Panc1 (cell line): ENCODE measurements at regions of chr1 and their contacts with region 1.

Region 1: DNA sequence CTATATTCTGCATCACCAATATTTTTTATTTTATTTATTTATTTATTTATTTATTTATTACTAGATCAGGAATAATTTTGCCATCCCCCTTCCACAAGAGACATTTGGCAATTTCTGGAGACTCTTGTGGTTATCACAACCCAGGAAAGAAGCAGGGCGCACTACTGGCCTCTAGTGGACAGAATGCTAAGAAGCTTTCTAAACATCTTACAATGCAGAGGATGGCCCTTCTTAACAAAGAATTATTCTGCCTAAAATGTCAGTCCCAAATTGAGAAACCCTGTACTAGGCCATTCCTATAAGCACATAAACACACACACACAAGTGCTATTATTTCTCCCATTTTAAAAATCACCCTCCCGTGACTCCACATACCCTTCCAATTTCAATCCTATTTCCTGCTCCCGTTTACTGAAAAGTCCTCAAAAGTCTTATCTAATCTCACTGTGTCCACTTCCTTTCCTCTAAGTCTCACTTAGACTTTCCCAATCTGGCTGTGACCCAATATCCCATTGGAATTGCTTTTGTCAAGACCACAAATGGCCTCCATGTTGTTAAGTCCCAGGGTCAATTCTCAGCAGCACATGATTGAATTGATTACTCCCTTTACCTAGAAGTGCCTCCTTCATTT is 43.7 kb upstream of the RNF11 start:
- DNase-seq: no peak
- ATAC-seq: peak; percentile 82
- H3K4me3 ChIP-seq: no peak overlapping the region
- H3K27ac ChIP-seq: no peak overlapping the region
- H3K4me1 ChIP-seq: no peaks in the 10 kb centered on the region
- H3K27me3 ChIP-seq: no peaks in the 10 kb centered on the region
- CTCF ChIP-seq: peak; percentile 84

Region 2: GRCh38 chr1:50368179-50369012 is 823.9 kb before region 1 on chr1:
- CTCF ChIA-PET with region 1: no interaction called
- POLR2A ChIA-PET with region 1: no interaction called
- in situ Hi-C with region 1: no loop called
- intact Hi-C with region 1: loop called (anchors 5 kb)
- DNase-seq: peak; percentile 13
- ATAC-seq: peak; percentile 92
- H3K4me3 ChIP-seq: peak overlapping the region; percentile 7 to 23; a peak in 2 of 4 replicates
- H3K27ac ChIP-seq: no peak overlapping the region
- H3K4me1 ChIP-seq: peaks cover 3% of the 10 kb centered on the region; the same call in 1 of the 2 replicates
- H3K27me3 ChIP-seq: peaks cover 15% of the 10 kb centered on the region
- CTCF ChIP-seq: peak; percentile 91

Region 3: GRCh38 chr1:50774759-50775351 is 417.5 kb before region 1 on chr1:
- CTCF ChIA-PET with region 1: no interaction called
- POLR2A ChIA-PET with region 1: no interaction called
- in situ Hi-C with region 1: no loop called
- intact Hi-C with region 1: loop called (anchors 2 kb)
- DNase-seq: peak; percentile 15
- ATAC-seq: peak; percentile 74; the same call in 1 of the 2 replicates
- H3K4me3 ChIP-seq: no peak overlapping the region
- H3K27ac ChIP-seq: no peak overlapping the region
- H3K4me1 ChIP-seq: no peaks in the 10 kb centered on the region
- H3K27me3 ChIP-seq: no peaks in the 10 kb centered on the region
- CTCF ChIP-seq: peak; percentile 74; the same call in 1 of the 2 replicates

Region 4: GRCh38 chr1:50873458-50874187 is 318.7 kb before region 1 on chr1:
- CTCF ChIA-PET with region 1: interaction called, 6 read pairs
- POLR2A ChIA-PET with region 1: no interaction called
- in situ Hi-C with region 1: no loop called
- intact Hi-C with region 1: loop called (anchors 5 kb)
- DNase-seq: peak; percentile 65
- ATAC-seq: peak; percentile 98
- H3K4me3 ChIP-seq: peak overlapping the region; percentile 23 to 54
- H3K27ac ChIP-seq: peak overlapping the region; percentile 18; the same call in 1 of the 2 replicates
- H3K4me1 ChIP-seq: peaks cover 5% of the 10 kb centered on the region; the same call in 1 of the 2 replicates
- H3K27me3 ChIP-seq: no peaks in the 10 kb centered on the region
- CTCF ChIP-seq: peak; percentile 95

Region 5: GRCh38 chr1:50968158-50968820 is 224.0 kb before region 1 on chr1:
- CTCF ChIA-PET with region 1: interaction called, 10 read pairs
- POLR2A ChIA-PET with region 1: no interaction called
- in situ Hi-C with region 1: no loop called
- intact Hi-C with region 1: no loop called
- DNase-seq: no peak
- ATAC-seq: peak; percentile 90
- H3K4me3 ChIP-seq: peak overlapping the region; percentile 74 to 95
- H3K27ac ChIP-seq: peak overlapping the region; percentile 100
- H3K4me1 ChIP-seq: peaks cover 7% of the 10 kb centered on the region; the same call in 1 of the 2 replicates
- H3K27me3 ChIP-seq: no peaks in the 10 kb centered on the region
- CTCF ChIP-seq: peak; percentile 65

Region 6: DNA sequence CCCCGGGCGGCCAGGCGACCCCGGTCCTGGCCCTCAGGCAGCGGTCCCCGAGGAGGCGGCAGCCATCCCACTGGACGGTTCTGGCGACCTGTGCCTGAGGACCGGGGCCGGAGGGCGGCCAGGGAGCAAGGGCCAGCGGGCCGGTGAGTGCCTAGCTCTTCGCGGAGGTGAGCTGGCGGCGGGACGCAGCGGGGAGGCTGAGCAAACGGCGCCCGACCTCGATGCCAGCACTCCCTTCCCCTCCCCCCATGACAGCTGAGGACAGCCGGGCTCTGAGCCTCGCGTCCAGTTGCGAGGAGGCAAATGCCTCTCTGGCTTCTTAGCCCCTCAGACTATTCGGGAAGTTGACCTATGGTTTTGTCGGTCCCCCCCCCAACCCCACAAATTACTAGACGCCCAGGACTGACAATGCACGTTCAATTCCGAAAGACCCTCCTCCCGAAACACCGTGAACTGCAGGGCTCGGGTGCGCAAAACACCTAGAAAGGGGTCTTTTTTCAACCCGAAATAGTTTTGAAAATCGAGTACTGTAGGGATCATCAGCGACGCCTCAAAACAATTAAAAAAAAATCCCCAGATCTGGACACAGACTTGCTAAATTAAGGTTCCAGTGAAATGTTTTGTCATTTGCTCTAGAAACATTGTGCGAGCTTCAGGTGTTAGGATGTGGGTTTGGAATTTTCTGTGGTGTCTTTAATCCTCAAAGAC is 214.0 kb before region 1 on chr1:
- CTCF ChIA-PET with region 1: interaction called, 3 read pairs
- POLR2A ChIA-PET with region 1: no interaction called
- in situ Hi-C with region 1: no loop called
- intact Hi-C with region 1: loop called (anchors 5 kb)
- DNase-seq: no peak
- ATAC-seq: peak; percentile 81
- H3K4me3 ChIP-seq: peak overlapping the region; percentile 80 to 83
- H3K27ac ChIP-seq: peak overlapping the region; percentile 100
- H3K4me1 ChIP-seq: peaks cover 52% of the 10 kb centered on the region
- H3K27me3 ChIP-seq: no peaks in the 10 kb centered on the region
- CTCF ChIP-seq: no peak

Region 7: DNA sequence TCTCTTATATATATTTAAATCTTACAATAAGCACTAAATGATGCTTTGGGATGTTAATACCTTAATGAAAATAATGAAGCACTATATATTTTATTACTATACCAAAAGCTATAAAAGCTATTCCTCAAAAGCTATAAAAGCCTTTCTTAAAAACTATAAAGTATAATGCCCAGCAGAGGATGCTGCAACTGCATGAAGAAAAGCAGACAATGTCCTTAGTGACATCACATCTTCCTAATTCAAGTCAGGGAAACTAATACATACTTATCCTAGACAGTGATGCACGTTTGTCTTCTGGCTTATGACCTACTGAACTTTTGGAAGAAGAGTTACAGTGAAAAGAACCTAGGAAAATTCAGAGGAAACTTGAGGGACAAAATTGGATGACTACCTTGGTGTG is 103.8 kb before region 1 on chr1:
- CTCF ChIA-PET with region 1: interaction called, 9 read pairs
- POLR2A ChIA-PET with region 1: no interaction called
- in situ Hi-C with region 1: no loop called
- intact Hi-C with region 1: loop called (anchors 1 kb)
- DNase-seq: peak; percentile 5
- ATAC-seq: no peak
- H3K4me3 ChIP-seq: no peak overlapping the region
- H3K27ac ChIP-seq: no peak overlapping the region
- H3K4me1 ChIP-seq: no peaks in the 10 kb centered on the region
- H3K27me3 ChIP-seq: no peaks in the 10 kb centered on the region; the same call in 1 of the 2 replicates
- CTCF ChIP-seq: peak; percentile 39; the same call in 1 of the 2 replicates